ENCODE measurements at regions of chr9 and their contacts with region 1.

Region 1: GRCh38 chr9:131478421-131478868 is 24.3 kb upstream of the POMT1 start:
- DNase-seq: peak in 1 of 3 donors; percentile 55
- ATAC-seq: peak in 3 of 4 donors; percentile 8 to 45 (median 15)
- H3K4me3 ChIP-seq: no peak overlapping the region
- H3K27ac ChIP-seq: no peak overlapping the region
- H3K4me1 ChIP-seq: no peaks in the 10 kb centered on the region
- H3K27me3 ChIP-seq: no peaks in the 10 kb centered on the region
- CTCF ChIP-seq: peak in 3 of 4 donors; percentile 39 to 51 (median 48)
- POLR2A ChIP-seq: no peak

Region 2: GRCh38 chr9:131349881-131350563 is 128.4 kb before region 1 on chr9:
- intact Hi-C with region 1: loop called in 1 of 2 experiments (anchors 10 kb)
- DNase-seq: peak; percentile 88 to 93 (median 90)
- ATAC-seq: peak; percentile 98 to 99 (median 98)
- H3K4me3 ChIP-seq: peak overlapping the region in 1 of 3 donors; percentile 32
- H3K27ac ChIP-seq: no peak overlapping the region
- H3K4me1 ChIP-seq: peaks cover 0 to 8% (median 4%) of the 10 kb centered on the region in 4 donors
- H3K27me3 ChIP-seq: no peaks in the 10 kb centered on the region
- CTCF ChIP-seq: peak; percentile 80 to 88 (median 88)
- POLR2A ChIP-seq: no peak

Measured in right lobe of liver (tissue), 6 donors.